ENCODE measurements at regions of chr4 and their contacts with region 1.

Region 1: GRCh38 chr4:153634738-153635353 is 49.2 kb upstream of the TLR2 start:
- DNase-seq: no peak
- CTCF ChIP-seq: peak; percentile 38

Region 2: DNA sequence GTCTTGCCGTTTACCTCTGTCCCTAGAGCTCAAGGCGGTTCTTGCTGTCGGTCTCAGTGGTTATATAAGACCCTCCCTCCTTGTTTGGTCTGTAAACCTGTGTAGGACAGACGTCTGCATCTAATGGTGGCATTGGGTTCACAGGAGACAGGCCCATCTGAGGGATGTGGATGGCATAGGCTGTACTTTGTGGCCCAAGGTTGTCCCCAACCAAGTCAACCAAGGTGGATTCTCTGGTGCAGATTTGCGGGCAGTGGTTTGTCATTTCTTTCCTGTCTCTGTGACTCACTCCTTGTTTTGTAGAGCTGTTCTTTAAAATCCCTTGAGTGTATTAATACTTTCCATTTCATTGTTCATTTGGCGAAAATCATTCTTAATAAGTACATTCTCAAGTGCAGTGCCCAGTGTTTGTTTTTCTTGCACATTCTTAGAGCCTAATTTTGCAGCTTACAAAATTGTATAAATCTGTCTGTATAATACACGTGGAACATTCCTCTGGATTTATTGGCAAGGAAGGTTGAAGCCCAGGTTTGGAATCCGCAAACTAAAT is 18.8 kb before region 1 on chr4:
- CTCF ChIA-PET with region 1: interaction called, 13 read pairs
- POLR2A ChIA-PET with region 1: no interaction called
- DNase-seq: no peak
- CTCF ChIP-seq: no peak

Measured in GM10248 (cell line).